ENCODE measurements at regions of chr12 and their contacts with region 1.

Region 1: GRCh38 chr12:62720661-62721330 is 214.2 kb downstream of the PPM1H start:
- DNase-seq: no peak
- H3K4me3 ChIP-seq: no peak overlapping the region
- H3K27me3 ChIP-seq: no peaks in the 10 kb centered on the region
- CTCF ChIP-seq: no peak

Region 2: DNA sequence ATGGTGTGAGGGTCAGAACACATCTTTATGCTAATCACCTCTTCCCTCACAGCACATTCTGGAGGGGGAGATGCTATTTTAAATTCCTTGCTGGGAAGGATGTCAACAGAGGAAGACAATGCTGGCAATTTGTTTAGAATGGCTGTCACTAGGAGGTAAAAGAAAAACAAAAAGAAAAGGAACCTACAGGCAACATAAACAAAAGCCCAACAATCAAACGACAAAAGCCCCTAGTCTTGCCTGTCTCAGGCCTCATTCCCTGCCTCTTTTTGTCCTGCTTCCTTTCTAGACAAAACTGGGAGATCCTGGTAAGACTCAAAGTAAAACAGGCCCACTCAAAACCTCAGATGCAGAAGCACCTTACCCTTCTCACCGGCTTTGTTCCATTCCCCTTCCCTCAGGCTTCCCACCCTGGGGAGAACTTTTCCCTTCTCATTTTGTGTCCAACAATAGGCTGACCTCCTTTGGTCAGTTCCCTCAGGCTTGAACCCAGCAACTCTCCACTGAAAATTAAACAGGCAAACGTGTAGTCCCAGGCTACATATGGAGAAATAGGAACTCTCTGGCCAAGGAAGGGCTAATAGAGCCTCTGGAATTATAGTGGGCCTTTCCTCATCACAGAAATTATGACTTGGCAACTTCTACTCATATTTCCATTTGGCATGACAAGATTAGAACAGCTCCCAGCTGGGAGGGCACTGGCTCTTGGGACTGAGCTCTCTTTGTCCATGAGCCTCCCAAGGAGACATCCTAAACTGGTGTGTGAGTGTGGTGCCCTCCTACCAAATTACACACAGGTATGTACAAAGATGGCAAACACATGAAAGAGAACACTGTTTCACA is 61.1 kb before region 1 on chr12:
- CTCF ChIA-PET with region 1: no interaction called
- POLR2A ChIA-PET with region 1: interaction called, 14 read pairs
- DNase-seq: no peak
- H3K4me3 ChIP-seq: no peak overlapping the region
- H3K27me3 ChIP-seq: no peaks in the 10 kb centered on the region
- CTCF ChIP-seq: no peak

Measured in BJ (cell line).